Panc1 (cell line): ENCODE measurements at regions of chr22 and their contacts with region 1.

Region 1: GRCh38 chr22:25404928-25405816 is 159.3 kb upstream of the GRK3 start:
- DNase-seq: no peak
- ATAC-seq: peak; percentile 62
- H3K4me3 ChIP-seq: peak overlapping the region; percentile 65 to 84
- H3K27ac ChIP-seq: peak overlapping the region; percentile 84
- H3K4me1 ChIP-seq: peaks cover 25% of the 10 kb centered on the region
- H3K27me3 ChIP-seq: no peaks in the 10 kb centered on the region
- CTCF ChIP-seq: no peak

Region 2: GRCh38 chr22:25368271-25368670 is 36.9 kb before region 1 on chr22:
- CTCF ChIA-PET with region 1: no interaction called
- POLR2A ChIA-PET with region 1: interaction called, 15 read pairs
- in situ Hi-C with region 1: no loop called
- intact Hi-C with region 1: no loop called
- DNase-seq: no peak
- ATAC-seq: no peak
- H3K4me3 ChIP-seq: no peak overlapping the region
- H3K27ac ChIP-seq: no peak overlapping the region
- H3K4me1 ChIP-seq: peaks cover 17% of the 10 kb centered on the region
- H3K27me3 ChIP-seq: no peaks in the 10 kb centered on the region
- CTCF ChIP-seq: no peak

Region 3: DNA sequence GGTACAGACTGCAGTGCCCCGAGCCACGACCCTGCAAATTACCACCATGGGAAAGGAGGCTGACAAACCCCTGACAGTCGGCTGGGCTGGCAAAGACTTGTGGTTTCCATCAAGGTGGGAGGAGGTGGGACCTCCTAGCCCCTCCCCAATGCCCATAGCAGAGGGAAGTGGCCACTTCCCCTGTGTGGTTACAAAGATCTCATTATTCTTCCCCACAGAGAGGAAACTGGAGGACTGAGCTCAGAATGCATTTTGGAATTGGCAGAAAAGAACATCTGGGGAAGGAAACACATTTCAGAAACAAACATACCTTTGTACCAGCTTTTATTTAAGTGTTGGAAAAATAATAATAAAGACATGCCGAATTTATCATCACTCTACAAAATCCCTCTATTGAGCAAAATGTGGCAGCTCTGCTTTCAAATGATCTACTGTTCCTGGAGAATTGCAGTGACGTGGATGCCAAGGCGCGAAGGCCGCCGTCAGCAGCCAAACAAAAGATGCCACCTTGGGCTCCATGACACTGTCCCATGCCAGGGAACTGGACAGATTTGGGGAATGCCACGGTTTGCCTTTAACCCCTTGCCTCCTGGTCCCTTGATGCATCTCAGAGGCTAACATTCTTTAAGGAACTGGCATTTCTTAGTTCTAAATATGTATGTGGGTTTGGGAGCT is 16.2 kb before region 1 on chr22:
- CTCF ChIA-PET with region 1: no interaction called
- POLR2A ChIA-PET with region 1: interaction called, 16 read pairs
- in situ Hi-C with region 1: no loop called
- intact Hi-C with region 1: no loop called
- DNase-seq: no peak
- ATAC-seq: no peak
- H3K4me3 ChIP-seq: no peak overlapping the region
- H3K27ac ChIP-seq: no peak overlapping the region
- H3K4me1 ChIP-seq: peaks cover 35% of the 10 kb centered on the region
- H3K27me3 ChIP-seq: no peaks in the 10 kb centered on the region
- CTCF ChIP-seq: no peak

Region 4: GRCh38 chr22:25630447-25630846 is 225.3 kb after region 1 on chr22:
- CTCF ChIA-PET with region 1: no interaction called
- POLR2A ChIA-PET with region 1: interaction called, 18 read pairs
- in situ Hi-C with region 1: no loop called
- intact Hi-C with region 1: no loop called
- DNase-seq: no peak
- ATAC-seq: no peak
- H3K4me3 ChIP-seq: no peak overlapping the region
- H3K27ac ChIP-seq: no peak overlapping the region
- H3K4me1 ChIP-seq: no peaks in the 10 kb centered on the region
- H3K27me3 ChIP-seq: no peaks in the 10 kb centered on the region
- CTCF ChIP-seq: no peak